A549 (cell line): ENCODE measurements at regions of chr16 and their contacts with region 1.

Region 1: DNA sequence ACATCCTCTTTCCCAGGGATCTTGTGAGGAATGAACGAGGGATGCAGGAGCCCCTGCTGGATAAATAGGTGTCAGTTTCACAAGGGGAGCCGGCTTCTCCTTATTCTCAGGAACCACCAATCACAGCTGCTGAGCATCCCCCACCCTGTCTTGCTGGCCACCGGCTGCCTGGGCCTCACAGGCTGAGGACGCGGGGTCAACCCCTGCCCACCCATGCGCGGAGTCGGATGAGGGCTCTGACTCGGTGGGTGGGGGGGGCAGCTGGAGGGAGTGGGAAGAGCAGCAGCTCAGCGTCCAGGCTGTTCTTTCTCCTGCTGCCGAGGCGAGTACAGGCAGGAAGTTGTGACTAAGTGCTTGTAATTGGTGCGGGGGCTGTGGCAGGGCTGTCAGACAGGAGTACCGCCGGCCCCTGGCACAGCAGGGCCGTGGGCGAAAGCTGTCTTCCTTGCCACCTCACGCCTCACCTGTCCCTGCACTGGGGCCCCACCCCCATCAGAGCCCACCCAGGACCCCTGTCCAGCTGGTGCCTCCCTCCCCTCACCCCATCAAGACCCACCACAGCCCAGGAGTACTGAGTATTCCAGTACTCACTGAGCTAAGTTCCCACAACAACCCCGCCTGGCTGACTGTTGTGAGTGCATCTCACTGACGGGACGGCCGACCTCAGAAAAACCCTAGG is 11.0 kb upstream of the DPEP1 start:
- DNase-seq: peak; percentile 55 to 56
- ATAC-seq: peak; percentile 65 to 71
- H3K4me3 ChIP-seq: no peak overlapping the region
- H3K27ac ChIP-seq: peak overlapping the region; percentile 23 to 76; a peak in 4 of 6 replicates
- H3K4me1 ChIP-seq: peaks cover 30% of the 10 kb centered on the region
- CTCF ChIP-seq: no peak
- EP300 ChIP-seq: no peak
- POLR2A ChIP-seq: no peak
- RAD21 ChIP-seq: no peak

Region 2: DNA sequence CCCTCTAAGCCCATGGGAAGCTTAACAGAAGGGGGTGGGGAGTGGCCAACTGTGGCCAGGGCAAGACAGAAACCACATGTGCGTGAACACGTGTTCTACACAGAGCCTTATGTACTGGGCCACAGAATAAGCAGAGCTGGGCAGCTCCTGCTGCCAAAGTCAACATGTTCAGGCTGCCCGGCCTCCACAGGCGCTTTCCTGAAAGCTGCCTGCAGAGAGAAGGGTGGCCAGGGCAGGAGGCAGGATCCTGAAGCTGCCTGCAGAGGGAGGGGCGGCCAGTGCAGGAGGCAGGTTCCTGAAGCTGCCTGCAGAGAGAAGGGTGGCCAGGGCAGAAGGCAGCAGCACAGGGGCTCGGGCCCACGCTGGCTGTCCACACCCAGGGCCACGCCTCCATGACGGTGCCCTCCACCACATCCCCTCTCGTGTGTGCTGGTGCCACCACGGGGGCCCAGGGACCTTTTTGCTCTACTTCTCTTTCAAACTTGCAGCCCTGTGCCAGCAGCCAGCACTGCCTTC is 191.6 kb before region 1 on chr16:
- CTCF ChIA-PET with region 1: no interaction called
- POLR2A ChIA-PET with region 1: no interaction called
- DNase-seq: no peak
- ATAC-seq: peak; percentile 69 to 70
- H3K4me3 ChIP-seq: no peak overlapping the region
- H3K27ac ChIP-seq: no peak overlapping the region; a peak in 1 of 6 replicates
- H3K4me1 ChIP-seq: peaks cover 60% of the 10 kb centered on the region; the same call in 2 of the 3 replicates
- CTCF ChIP-seq: no peak
- EP300 ChIP-seq: no peak
- POLR2A ChIP-seq: no peak
- RAD21 ChIP-seq: no peak

Region 3: DNA sequence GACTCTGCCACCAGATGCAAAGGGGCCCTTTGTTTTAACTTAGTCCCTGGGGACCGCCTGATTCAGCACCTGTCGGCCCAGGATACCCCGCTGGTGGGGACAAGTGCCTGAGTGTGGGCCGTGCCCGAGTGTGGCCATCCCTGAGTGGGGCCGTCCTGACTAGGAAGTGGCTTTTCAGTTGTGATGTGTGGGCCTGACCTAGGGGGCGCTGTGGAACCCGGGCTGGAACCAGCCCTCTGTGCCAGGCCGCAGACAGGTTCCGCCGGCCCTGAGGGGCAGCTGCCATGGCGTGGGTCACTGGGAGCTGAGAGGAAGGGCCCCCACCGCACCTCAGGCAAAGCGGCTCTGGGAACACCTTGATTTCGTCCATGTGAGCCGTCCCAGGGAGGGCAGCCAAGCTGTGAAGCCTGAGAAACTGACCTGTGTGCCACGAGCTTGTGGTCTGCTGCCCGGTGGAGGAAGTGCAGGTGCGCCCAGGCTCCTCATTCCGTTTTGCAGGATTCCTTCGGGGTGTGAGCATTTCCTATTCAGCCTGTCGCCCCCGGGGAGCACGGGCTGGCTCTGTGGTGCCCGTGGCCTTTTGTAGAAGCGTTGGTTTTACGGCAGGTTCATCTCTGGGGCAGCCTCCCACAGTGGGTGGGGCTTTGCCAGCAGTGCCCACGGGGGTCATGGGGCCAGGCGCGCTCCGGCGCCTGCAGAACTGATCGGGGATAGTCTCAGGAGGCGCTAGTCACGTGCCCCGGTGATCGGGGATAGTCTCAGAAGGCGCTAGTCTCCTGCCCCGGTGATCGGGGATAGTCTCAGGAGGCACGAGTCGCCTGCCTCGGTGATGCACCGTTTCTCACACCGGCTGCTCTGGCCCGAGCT is 36.7 kb before region 1 on chr16:
- CTCF ChIA-PET with region 1: interaction called, 10 read pairs
- POLR2A ChIA-PET with region 1: no interaction called
- DNase-seq: peak; percentile 50 to 74
- ATAC-seq: peak; percentile 45 to 60
- H3K4me3 ChIP-seq: peak overlapping the region; percentile 99; the same call in 1 of the 3 replicates
- H3K27ac ChIP-seq: peak overlapping the region; percentile 37 to 96; a peak in 5 of 6 replicates
- H3K4me1 ChIP-seq: peaks cover 39% of the 10 kb centered on the region
- CTCF ChIP-seq: peak; percentile 76
- EP300 ChIP-seq: 0 out of 5 replicates have a peak, but pooled peaks of 1 of the 2 experiments have one; percentile 8
- POLR2A ChIP-seq: peak; percentile 37; the same call in 1 of the 2 replicates
- RAD21 ChIP-seq: no peak

Region 4: DNA sequence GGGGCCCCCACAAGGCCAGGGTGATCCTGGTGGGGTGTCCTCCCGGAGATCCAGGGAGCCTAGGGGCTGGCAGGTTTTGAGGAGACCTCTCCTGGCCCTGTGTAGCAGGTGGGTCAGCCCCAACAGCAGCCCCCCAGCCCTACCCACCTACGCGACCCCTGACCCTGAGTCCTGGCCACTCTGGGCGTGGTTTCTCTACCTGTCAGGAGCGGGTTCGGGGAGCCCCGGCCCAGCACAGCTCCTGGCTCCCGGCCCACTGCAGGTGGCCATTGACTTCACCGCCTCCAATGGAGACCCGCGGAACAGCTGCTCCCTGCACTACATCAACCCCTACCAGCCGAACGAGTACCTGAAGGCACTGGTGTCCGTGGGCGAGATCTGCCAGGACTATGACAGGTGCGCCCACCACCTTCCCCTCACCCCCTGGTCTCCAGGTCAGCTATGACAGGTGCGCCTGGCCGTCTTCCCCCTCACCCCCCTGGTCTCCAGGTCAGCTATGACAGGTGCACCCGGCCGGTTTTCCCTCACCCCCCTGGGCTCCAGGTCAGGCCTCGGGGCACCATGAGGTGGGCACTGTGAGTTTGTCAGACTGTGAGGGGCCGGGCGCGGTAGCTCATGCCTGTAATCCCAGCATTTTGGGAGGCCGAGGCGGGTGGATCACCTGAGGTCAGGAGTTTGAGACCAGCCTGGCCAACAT is 13.9 kb before region 1 on chr16:
- CTCF ChIA-PET with region 1: interaction called, 18 read pairs
- POLR2A ChIA-PET with region 1: no interaction called
- DNase-seq: no peak
- ATAC-seq: no peak
- H3K4me3 ChIP-seq: no peak overlapping the region
- H3K27ac ChIP-seq: no peak overlapping the region
- H3K4me1 ChIP-seq: no peaks in the 10 kb centered on the region
- CTCF ChIP-seq: no peak
- EP300 ChIP-seq: no peak
- POLR2A ChIP-seq: no peak
- RAD21 ChIP-seq: no peak

Region 5: DNA sequence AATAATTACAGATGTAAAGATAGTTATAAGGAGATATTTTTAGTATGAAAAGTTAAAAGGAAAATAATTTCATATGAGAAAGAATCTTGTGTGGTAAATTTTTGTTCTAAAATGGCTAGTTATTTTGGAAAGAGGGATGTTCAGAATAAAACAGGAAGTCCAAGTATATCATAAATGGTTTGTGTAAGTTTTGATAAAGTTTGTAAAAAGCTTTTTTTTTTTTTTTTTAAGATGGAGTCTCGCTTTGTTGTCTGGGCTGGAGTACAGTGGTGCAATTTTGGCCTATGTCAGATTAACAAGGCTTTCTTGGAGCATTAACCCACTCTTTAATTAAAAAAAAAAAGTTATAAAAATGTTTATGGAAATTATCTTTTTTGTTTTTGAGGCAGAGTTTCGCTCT is 75.8 kb after region 1 on chr16:
- CTCF ChIA-PET with region 1: no interaction called
- POLR2A ChIA-PET with region 1: no interaction called
- DNase-seq: no peak
- ATAC-seq: no peak
- H3K4me3 ChIP-seq: no peak overlapping the region
- H3K27ac ChIP-seq: no peak overlapping the region
- H3K4me1 ChIP-seq: no peaks in the 10 kb centered on the region
- CTCF ChIP-seq: no peak
- EP300 ChIP-seq: no peak
- POLR2A ChIP-seq: no peak
- RAD21 ChIP-seq: no peak

Region 6: GRCh38 chr16:89749647-89750046 is 147.2 kb after region 1 on chr16:
- CTCF ChIA-PET with region 1: no interaction called
- POLR2A ChIA-PET with region 1: no interaction called
- DNase-seq: no peak
- ATAC-seq: no peak
- H3K4me3 ChIP-seq: no peak overlapping the region
- H3K27ac ChIP-seq: no peak overlapping the region
- H3K4me1 ChIP-seq: no peaks in the 10 kb centered on the region
- CTCF ChIP-seq: no peak
- EP300 ChIP-seq: no peak
- POLR2A ChIP-seq: no peak
- RAD21 ChIP-seq: no peak

Region 7: GRCh38 chr16:89801800-89802199 is 199.4 kb after region 1 on chr16:
- CTCF ChIA-PET with region 1: no interaction called
- POLR2A ChIA-PET with region 1: no interaction called
- DNase-seq: no peak
- ATAC-seq: no peak
- H3K4me3 ChIP-seq: no peak overlapping the region
- H3K27ac ChIP-seq: no peak overlapping the region
- H3K4me1 ChIP-seq: no peaks in the 10 kb centered on the region
- CTCF ChIP-seq: no peak
- EP300 ChIP-seq: no peak
- POLR2A ChIP-seq: no peak
- RAD21 ChIP-seq: no peak